ENCODE measurements at regions of chr2 and their contacts with region 1.

Region 1: DNA sequence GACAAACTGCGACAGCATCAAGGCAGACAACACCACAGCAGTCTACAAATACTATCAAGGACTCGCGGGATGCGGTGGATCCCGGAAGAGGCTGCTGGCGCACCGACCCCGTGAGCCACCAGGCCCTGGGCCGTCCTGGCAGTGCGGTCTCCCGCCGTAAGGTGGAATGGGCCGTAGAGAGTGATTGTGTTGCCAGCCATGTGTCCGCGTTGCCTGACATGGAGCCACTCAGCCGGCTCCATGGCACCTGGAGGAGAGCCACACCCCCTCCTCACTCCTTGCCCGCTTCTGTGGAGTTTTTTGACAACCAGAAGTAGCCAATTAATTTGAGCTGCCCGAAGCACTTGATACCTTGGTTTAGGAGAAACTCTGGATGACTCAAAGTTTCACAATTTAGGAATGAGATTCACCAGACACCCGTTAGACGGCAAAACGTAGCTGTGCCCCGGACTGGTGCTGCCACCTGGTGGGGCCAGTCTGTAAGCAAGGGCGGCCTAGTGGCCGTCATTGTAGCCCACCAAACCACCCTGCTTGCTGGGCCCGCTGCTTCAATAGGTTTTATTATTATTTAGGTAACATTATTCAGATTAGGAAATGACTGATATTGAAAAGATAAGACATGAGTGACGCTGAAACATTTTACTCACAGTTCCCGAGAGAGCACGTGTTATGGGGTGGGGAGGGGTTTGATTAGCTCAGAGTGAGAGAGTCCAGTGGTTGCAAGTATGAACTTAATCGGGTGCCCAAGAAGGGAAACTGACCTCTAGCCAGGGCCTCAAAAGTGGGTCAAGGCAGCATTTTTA is 10.2 kb upstream of the IMP4 start:
- DNase-seq: peak; percentile 57 to 73
- H3K4me3 ChIP-seq: peak overlapping the region; percentile 31; the same call in 1 of the 2 replicates
- H3K27ac ChIP-seq: no peak overlapping the region
- H3K4me1 ChIP-seq: peaks cover 5% of the 10 kb centered on the region; the same call in 1 of the 2 replicates
- H3K27me3 ChIP-seq: peaks cover 36% of the 10 kb centered on the region
- CTCF ChIP-seq: peak; percentile 95

Region 2: GRCh38 chr2:129936334-129936934 is 396.0 kb before region 1 on chr2:
- CTCF ChIA-PET with region 1: interaction called, 7 read pairs
- POLR2A ChIA-PET with region 1: no interaction called
- intact Hi-C with region 1: loop called (anchors 1 kb)
- DNase-seq: peak in 1 of 2 experiments; percentile 54
- H3K4me3 ChIP-seq: no peak overlapping the region
- H3K27ac ChIP-seq: no peak overlapping the region
- H3K4me1 ChIP-seq: no peaks in the 10 kb centered on the region
- H3K27me3 ChIP-seq: peaks cover 40% of the 10 kb centered on the region
- CTCF ChIP-seq: peak; percentile 75

Region 3: GRCh38 chr2:130156624-130157004 is 175.9 kb before region 1 on chr2:
- CTCF ChIA-PET with region 1: interaction called, 3 read pairs
- POLR2A ChIA-PET with region 1: no interaction called
- intact Hi-C with region 1: loop called (anchors 1 kb)
- DNase-seq: no peak
- H3K4me3 ChIP-seq: no peak overlapping the region
- H3K27ac ChIP-seq: no peak overlapping the region
- H3K4me1 ChIP-seq: no peaks in the 10 kb centered on the region
- H3K27me3 ChIP-seq: no peaks in the 10 kb centered on the region
- CTCF ChIP-seq: no peak

Region 4: GRCh38 chr2:130181325-130181879 is 151.1 kb before region 1 on chr2 and contains the start of gene SMPD4:
- CTCF ChIA-PET with region 1: interaction called, 6 read pairs
- POLR2A ChIA-PET with region 1: no interaction called
- intact Hi-C with region 1: loop called (anchors 1 kb)
- DNase-seq: peak; percentile 87 to 97
- H3K4me3 ChIP-seq: peak within 1 kb of the TSS; percentile 79
- H3K27ac ChIP-seq: peak within 1 kb of the TSS; percentile 32; the same call in 1 of the 2 replicates
- H3K4me1 ChIP-seq: 0 out of 2 replicates have a peak, but pooled peaks cover 4% of the 10 kb centered on the region
- H3K27me3 ChIP-seq: no peaks in the 10 kb centered on the region
- CTCF ChIP-seq: no peak
- total RNA-seq, gene SMPD4: 77.9 and 84.1 TPM in 2 replicates

Region 5: DNA sequence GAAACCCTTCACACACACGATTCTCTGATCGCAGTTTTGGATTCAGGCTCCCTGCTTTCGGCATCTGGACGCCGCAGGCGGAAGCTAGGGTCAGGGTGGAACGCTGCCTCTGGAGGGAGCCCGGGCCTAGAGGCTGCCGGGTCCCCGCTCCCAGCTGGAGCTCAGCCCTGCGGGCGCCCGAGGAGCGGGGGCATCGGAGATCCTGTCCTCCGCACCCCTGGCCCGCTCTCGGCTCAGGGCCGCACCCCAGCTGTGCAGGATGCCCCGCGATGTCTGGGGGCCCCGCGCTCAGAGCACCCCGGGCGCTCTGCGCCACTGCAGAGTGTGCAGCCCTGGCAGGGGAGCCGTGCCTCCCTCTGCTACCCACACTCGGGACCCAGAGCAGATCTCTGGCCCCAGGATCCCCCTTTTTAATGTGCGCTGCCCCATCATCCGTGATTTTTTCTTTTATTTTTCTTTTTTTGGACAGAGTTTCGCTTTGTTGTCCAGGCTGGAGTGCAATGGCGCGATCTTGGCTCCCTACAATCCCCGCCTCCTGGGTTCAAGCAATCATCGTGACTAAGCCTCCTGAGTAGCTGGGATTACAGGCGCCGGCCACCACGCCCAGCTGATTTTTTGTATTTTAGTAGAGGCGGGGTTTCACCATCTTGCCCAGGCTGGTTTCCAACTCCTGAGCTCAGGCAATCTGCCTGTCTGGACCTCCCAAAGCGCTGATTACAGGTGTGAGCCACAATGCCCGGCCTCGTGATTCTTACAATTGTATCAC is 79.4 kb before region 1 on chr2:
- CTCF ChIA-PET with region 1: no interaction called
- POLR2A ChIA-PET with region 1: no interaction called
- intact Hi-C with region 1: loop called (anchors 2 kb)
- DNase-seq: peak; percentile 61 to 67
- H3K4me3 ChIP-seq: peak overlapping the region; percentile 63
- H3K27ac ChIP-seq: no peak overlapping the region
- H3K4me1 ChIP-seq: 0 out of 2 replicates have a peak, but pooled peaks cover 4% of the 10 kb centered on the region
- H3K27me3 ChIP-seq: peaks cover 1% of the 10 kb centered on the region; the same call in 1 of the 2 replicates
- CTCF ChIP-seq: no peak

Region 6: GRCh38 chr2:130355578-130356431 is 23.3 kb after region 1 on chr2 and contains the start of gene PTPN18:
- CTCF ChIA-PET with region 1: no interaction called
- POLR2A ChIA-PET with region 1: no interaction called
- intact Hi-C with region 1: loop called (anchors 1 kb)
- DNase-seq: peak; percentile 75 to 87
- H3K4me3 ChIP-seq: peak within 1 kb of the TSS; percentile 88
- H3K27ac ChIP-seq: no peak within 1 kb of the TSS
- H3K4me1 ChIP-seq: peaks cover 16% of the 10 kb centered on the region
- H3K27me3 ChIP-seq: no peaks in the 10 kb centered on the region
- CTCF ChIP-seq: peak; percentile 42; the same call in 1 of the 2 replicates
- total RNA-seq, gene PTPN18: 54.5 and 55.9 TPM in 2 replicates

Measured in PC-9 (cell line).